HepG2 (cell line): ENCODE measurements at regions of chr17 and their contacts with region 1.

Region 1: DNA sequence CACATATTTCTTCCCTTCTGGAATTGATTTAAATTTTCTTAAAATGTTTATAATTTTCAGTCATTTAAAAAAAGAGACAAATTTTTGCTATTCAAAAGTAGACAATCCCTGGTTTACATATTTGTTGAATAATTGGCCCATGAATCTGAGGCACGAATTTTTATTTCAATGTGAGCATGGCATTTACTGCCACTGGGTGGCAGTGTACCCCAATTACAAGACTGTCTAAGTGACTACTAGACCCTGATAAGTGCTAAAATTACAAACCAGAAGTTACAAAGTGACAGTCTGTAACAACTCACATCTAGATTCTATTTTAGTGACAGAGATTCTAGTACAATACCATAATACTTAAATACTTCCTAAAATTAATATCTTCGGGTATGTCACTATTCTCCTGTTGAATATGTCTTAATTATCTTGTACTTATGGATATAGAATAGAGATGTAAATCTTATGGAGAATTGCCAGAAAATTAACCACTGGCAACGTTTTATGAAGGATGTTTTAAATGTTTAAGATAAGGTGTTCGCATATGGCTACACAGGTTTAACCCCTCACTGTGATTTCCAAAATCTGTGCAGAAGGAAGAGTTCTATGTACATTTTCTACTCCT is 235.8 kb downstream of the MAP2K4 start:
- DNase-seq: peak; percentile 35
- ATAC-seq: peak; percentile 39; the same call in 2 of the 3 replicates
- H3K4me3 ChIP-seq: no peak overlapping the region
- H3K27ac ChIP-seq: no peak overlapping the region
- H3K4me1 ChIP-seq: no peaks in the 10 kb centered on the region
- H3K27me3 ChIP-seq: peaks cover 4 to 38% of the 10 kb centered on the region in 2 experiments; a peak in 3 of 5 replicates
- CTCF ChIP-seq: peak; percentile 67
- EP300 ChIP-seq: no peak
- POLR2A ChIP-seq: no peak
- RAD21 ChIP-seq: peak; percentile 45

Region 2: GRCh38 chr17:12222392-12222791 is 34.1 kb before region 1 on chr17:
- CTCF ChIA-PET with region 1: no interaction called
- POLR2A ChIA-PET with region 1: no interaction called
- in situ Hi-C with region 1: no loop called
- intact Hi-C with region 1: no loop called
- DNase-seq: no peak
- ATAC-seq: no peak
- H3K4me3 ChIP-seq: no peak overlapping the region
- H3K27ac ChIP-seq: no peak overlapping the region
- H3K4me1 ChIP-seq: no peaks in the 10 kb centered on the region
- H3K27me3 ChIP-seq: peaks cover 0 to 20% of the 10 kb centered on the region in 2 experiments; a peak in 2 of 5 replicates
- CTCF ChIP-seq: no peak
- EP300 ChIP-seq: no peak
- POLR2A ChIP-seq: no peak
- RAD21 ChIP-seq: no peak

Region 3: DNA sequence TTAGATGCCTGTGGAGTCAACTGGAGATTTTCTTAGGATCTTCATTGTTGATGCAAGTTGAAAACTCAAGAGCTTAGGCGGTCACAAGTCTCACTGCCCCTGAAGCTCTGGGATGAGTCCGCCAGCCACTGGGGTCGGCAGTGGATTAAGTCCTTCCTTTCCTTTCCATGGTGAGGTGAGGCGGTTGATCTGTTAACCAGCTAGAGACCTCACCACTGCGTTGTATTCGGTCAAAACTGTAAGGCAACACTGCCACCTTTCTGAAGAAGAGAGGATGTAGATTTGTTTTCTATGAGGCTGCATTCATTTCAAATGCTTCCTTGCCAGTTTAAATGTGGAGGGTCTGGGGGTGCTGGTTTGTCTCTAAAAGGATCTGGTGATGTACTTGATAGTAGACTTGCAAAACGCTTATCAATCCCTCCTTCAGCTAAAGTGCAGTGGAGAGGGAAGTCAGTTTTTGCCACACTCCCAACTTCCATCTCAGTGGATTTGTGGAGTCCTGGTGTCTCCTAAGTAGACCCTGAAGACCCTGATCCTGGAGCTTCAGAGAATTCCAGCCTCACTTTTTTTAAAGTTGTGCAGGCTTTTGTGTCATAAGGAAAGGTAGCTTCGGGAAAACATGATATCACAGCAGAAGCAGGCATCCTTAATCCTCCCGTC is 410.9 kb after region 1 on chr17:
- CTCF ChIA-PET with region 1: interaction called, 17 read pairs
- POLR2A ChIA-PET with region 1: no interaction called
- in situ Hi-C with region 1: loop called (anchors 5 kb)
- intact Hi-C with region 1: no loop called
- DNase-seq: peak; percentile 62
- ATAC-seq: peak; percentile 67
- H3K4me3 ChIP-seq: no peak overlapping the region
- H3K27ac ChIP-seq: no peak overlapping the region
- H3K4me1 ChIP-seq: no peaks in the 10 kb centered on the region
- H3K27me3 ChIP-seq: peaks cover 0 to 39% of the 10 kb centered on the region in 2 experiments; a peak in 4 of 5 replicates
- CTCF ChIP-seq: peak; percentile 66
- EP300 ChIP-seq: no peak
- POLR2A ChIP-seq: no peak
- RAD21 ChIP-seq: 0 out of 2 replicates have a peak, but pooled peaks have one; percentile 41

Region 4: DNA sequence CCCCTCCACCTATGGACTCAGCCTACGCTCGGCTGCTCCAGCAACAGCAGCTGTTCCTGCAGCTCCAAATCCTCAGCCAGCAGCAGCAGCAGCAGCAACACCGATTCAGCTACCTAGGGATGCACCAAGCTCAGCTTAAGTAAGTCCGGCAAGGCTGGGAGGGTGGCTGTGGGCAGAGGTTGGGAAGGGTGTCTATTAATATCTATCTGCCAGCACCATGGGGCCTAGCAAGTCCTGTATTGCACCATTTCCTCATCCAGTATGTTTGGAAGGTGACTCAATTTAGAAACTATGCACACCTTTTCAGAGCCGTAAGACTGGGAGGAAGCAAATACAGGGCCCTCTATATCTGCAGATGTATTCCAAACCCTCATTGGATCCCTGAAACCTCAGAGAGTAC is 487.8 kb after region 1 on chr17:
- CTCF ChIA-PET with region 1: interaction called, 14 read pairs
- POLR2A ChIA-PET with region 1: no interaction called
- in situ Hi-C with region 1: no loop called
- intact Hi-C with region 1: no loop called
- DNase-seq: no peak
- ATAC-seq: no peak
- H3K4me3 ChIP-seq: no peak overlapping the region
- H3K27ac ChIP-seq: no peak overlapping the region
- H3K4me1 ChIP-seq: no peaks in the 10 kb centered on the region
- H3K27me3 ChIP-seq: peaks cover under 1 to 6% of the 10 kb centered on the region in 2 experiments; a peak in 2 of 5 replicates
- CTCF ChIP-seq: no peak
- EP300 ChIP-seq: no peak
- POLR2A ChIP-seq: no peak
- RAD21 ChIP-seq: no peak